ENCODE measurements at regions of chr11 and their contacts with region 1.

Region 1: GRCh38 chr11:87290304-87290922 is 252.7 kb downstream of the TMEM135 start:
- DNase-seq: peak; percentile 38
- ATAC-seq: 0 out of 2 replicates have a peak, but pooled peaks have one; percentile 50
- H3K4me3 ChIP-seq: no peak overlapping the region
- H3K27ac ChIP-seq: no peak overlapping the region
- H3K4me1 ChIP-seq: no peaks in the 10 kb centered on the region
- H3K27me3 ChIP-seq: no peaks in the 10 kb centered on the region
- CTCF ChIP-seq: peak; percentile 36 to 79 (median 75); a peak in 5 of 6 replicates
- POLR2A ChIP-seq: no peak
- RAD21 ChIP-seq: peak; percentile 86

Region 2: DNA sequence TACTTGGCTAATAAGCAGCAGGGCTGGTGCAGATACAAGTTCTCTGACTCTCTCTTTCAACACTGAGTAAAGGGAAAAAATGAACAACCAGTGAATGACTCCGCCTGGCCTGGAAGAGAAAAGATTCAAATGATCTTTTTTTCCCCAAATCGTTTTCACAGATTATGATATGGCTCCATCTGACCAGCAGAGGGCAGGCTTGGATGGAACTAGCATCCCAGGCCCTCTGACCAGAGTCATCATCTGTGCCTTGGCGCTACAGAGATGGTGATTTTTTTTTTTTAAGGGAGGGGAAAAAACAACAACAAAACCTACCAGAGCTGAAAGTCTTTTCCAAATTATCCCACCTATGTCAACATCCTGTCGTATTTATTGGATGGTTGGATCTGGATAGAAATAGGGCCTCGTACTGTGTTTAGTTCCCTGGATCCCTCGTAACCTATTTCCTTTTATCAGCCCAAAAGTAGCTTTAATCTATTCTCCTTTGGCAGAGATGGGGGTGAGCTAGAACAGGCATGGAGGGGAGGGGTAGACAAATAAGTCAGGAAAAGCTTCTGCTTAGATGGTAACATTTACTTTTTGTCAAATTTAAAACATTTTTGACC is 420.3 kb before region 1 on chr11:
- CTCF ChIA-PET with region 1: interaction called, 6 read pairs
- POLR2A ChIA-PET with region 1: no interaction called
- RAD21 ChIA-PET with region 1: no interaction called
- intact Hi-C with region 1: loop called (anchors 1 kb)
- DNase-seq: peak; percentile 41
- ATAC-seq: peak; percentile 97
- H3K4me3 ChIP-seq: no peak overlapping the region
- H3K27ac ChIP-seq: no peak overlapping the region
- H3K4me1 ChIP-seq: no peaks in the 10 kb centered on the region
- H3K27me3 ChIP-seq: no peaks in the 10 kb centered on the region
- CTCF ChIP-seq: peak; percentile 74 to 89 (median 81)
- POLR2A ChIP-seq: no peak
- RAD21 ChIP-seq: peak; percentile 94

Region 3: DNA sequence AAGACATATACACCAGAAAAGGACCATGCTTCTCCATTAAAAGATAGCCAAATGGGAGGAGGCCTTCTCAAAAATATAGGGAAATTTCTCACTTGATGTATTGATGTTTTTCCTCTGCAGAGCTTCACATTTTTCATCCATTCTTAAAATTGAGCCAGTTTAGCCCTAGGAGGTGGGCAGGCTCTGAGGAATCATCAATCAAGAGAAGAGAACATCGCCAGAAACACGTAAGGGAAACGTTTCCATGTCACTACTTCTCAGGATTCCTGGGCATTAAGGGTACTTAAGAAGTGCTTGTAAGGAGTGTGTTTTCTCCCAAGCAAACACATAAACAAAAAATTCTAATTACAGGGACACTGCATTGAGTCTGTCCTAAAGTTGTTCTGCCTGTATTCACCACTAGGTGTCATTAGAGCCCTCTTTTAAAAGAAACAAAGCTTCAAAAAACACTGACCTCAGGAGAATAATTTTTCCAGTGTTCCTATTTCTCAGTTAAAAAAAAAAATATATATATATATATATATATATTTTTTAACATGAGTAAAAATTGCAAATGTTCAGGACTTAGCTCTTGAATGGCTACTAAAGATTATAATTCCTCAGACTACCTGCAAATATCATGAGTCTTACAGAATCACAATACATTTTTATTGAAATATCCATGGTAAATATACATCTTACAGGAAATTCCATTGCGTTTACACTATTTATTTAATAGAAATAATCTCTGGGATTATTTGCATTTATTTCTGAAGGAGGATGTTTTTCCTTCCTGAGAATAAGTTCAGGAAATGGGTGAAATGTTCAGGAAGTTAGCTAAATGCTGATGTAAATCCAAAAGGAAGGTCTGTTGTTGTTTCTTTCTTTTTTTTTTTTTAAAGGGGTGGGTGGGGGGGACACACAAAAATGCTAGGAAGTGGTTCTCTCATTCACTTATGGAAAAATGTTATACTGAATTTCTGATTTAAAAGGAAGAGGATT is 351.2 kb before region 1 on chr11:
- CTCF ChIA-PET with region 1: interaction called, 15 read pairs
- POLR2A ChIA-PET with region 1: no interaction called
- RAD21 ChIA-PET with region 1: interaction called in 1 of 2 experiments, 5 read pairs
- intact Hi-C with region 1: loop called (anchors 1 kb)
- DNase-seq: peak; percentile 37
- ATAC-seq: peak; percentile 73
- H3K4me3 ChIP-seq: no peak overlapping the region
- H3K27ac ChIP-seq: no peak overlapping the region
- H3K4me1 ChIP-seq: no peaks in the 10 kb centered on the region
- H3K27me3 ChIP-seq: no peaks in the 10 kb centered on the region
- CTCF ChIP-seq: peak; percentile 57 to 65 (median 61); a peak in 5 of 6 replicates
- POLR2A ChIP-seq: no peak
- RAD21 ChIP-seq: peak; percentile 77

Region 4: DNA sequence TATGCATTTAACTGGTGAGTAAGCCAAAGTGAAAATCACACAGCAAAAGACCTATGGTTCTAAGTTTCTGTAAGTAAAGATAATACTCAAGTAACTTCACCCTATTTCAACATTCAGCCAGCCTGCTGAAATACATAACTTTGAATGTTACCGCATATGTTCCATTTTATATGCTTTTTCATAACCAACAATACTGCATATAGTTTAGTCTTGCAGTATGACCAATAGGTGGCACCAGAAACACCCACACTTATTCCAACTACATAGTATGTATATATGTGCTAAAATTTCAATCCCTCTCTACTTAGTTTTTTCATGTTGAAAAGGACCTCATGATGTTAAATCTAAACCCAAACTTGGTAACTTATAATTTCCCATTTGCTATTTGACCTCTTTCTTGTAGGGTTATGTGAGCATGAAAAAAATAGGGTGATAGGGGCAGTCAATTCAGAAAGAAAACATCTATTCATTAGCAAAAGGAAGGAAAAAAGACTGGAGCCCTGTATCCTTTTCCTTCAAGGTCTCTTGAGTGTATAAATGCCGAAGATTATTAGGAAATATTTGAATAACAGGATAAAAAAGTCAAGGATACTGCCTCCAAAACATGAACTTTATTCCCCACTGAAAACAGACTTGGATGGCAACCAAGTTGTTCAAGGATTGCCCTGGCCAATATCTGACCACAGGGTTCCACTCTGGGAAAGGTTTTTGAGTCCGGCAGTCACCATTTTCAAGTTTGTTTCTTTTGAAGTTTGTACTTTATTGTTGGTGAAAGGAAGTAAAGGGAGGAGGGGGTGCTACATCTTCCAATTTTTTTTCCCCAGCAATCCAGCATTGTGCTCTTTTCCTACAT is 311.4 kb before region 1 on chr11:
- CTCF ChIA-PET with region 1: no interaction called
- POLR2A ChIA-PET with region 1: no interaction called
- RAD21 ChIA-PET with region 1: no interaction called
- intact Hi-C with region 1: loop called (anchors 2 kb)
- DNase-seq: peak; percentile 21
- ATAC-seq: peak; percentile 93
- H3K4me3 ChIP-seq: no peak overlapping the region
- H3K27ac ChIP-seq: no peak overlapping the region
- H3K4me1 ChIP-seq: no peaks in the 10 kb centered on the region
- H3K27me3 ChIP-seq: no peaks in the 10 kb centered on the region
- CTCF ChIP-seq: peak; percentile 56 to 80 (median 63)
- POLR2A ChIP-seq: no peak
- RAD21 ChIP-seq: peak; percentile 70

Region 5: GRCh38 chr11:86990515-86990914 is 299.9 kb before region 1 on chr11:
- CTCF ChIA-PET with region 1: interaction called, 8 read pairs
- POLR2A ChIA-PET with region 1: no interaction called
- RAD21 ChIA-PET with region 1: no interaction called
- intact Hi-C with region 1: loop called (anchors 2 kb)
- DNase-seq: peak; percentile 22
- ATAC-seq: peak; percentile 55
- H3K4me3 ChIP-seq: no peak overlapping the region
- H3K27ac ChIP-seq: no peak overlapping the region
- H3K4me1 ChIP-seq: peaks cover 4 to 6% of the 10 kb centered on the region in 2 experiments; a peak in 2 of 4 replicates
- H3K27me3 ChIP-seq: no peaks in the 10 kb centered on the region
- CTCF ChIP-seq: no peak
- POLR2A ChIP-seq: no peak
- RAD21 ChIP-seq: no peak

Region 6: DNA sequence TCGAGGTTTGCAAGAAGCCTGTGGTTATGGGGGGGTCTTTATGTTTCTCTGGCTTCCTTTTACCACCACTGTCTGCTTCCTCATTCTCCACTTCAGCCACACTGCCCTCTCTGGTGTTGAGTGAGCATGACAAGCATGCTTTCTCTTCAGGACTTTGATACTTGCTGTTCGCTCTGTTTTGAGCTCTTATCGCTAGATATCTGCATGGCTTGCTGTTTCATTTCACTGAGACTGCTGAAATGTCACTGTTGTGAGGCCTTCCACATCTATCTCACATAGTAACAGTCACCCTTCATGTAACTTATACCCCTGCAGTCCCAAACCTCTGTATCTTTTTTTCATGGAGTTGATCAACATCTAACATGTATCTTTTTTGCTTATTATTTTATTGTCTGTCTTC is 192.8 kb before region 1 on chr11:
- CTCF ChIA-PET with region 1: no interaction called
- POLR2A ChIA-PET with region 1: no interaction called
- RAD21 ChIA-PET with region 1: no interaction called
- intact Hi-C with region 1: loop called (anchors 5 kb)
- DNase-seq: peak; percentile 19
- ATAC-seq: peak; percentile 92
- H3K4me3 ChIP-seq: no peak overlapping the region
- H3K27ac ChIP-seq: no peak overlapping the region
- H3K4me1 ChIP-seq: no peaks in the 10 kb centered on the region
- H3K27me3 ChIP-seq: no peaks in the 10 kb centered on the region
- CTCF ChIP-seq: peak; percentile 22 to 87 (median 69); a peak in 5 of 6 replicates
- POLR2A ChIP-seq: no peak
- RAD21 ChIP-seq: peak; percentile 34

Region 7: DNA sequence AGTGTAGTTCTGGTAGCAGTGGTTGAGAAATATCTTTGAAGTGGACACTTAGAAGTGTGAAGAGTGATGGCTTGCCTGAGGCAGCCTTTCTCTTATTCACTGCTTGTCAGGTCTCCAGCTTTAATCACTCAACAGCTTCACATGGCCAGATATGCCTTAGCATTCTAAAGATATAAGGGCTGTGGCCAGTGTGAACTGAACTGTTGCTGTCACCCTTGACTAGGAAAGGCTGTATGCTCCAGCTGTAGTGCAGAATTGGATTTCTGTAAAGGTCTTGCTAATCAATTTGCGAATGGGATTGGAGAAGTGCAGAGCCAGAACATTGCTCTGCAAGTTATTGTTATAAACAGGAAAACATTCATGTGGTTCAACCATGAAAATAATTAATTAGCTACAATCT is 14.0 kb after region 1 on chr11:
- CTCF ChIA-PET with region 1: no interaction called
- POLR2A ChIA-PET with region 1: no interaction called
- RAD21 ChIA-PET with region 1: no interaction called
- intact Hi-C with region 1: no loop called
- DNase-seq: no peak
- ATAC-seq: no peak
- H3K4me3 ChIP-seq: no peak overlapping the region
- H3K27ac ChIP-seq: no peak overlapping the region
- H3K4me1 ChIP-seq: no peaks in the 10 kb centered on the region
- H3K27me3 ChIP-seq: no peaks in the 10 kb centered on the region
- CTCF ChIP-seq: no peak
- POLR2A ChIP-seq: no peak
- RAD21 ChIP-seq: no peak